Activated B cell treated with CpG ODN at 0.5 μM for 24 hours (primary cell): ENCODE measurements at regions of chr2 and their contacts with region 1.

Region 1: GRCh38 chr2:62065243-62065642 is 130.7 kb upstream of the B3GNT2 start:
- DNase-seq: no peak
- ATAC-seq: peak; percentile 16
- H3K4me3 Mint-ChIP-seq: no peak overlapping the region
- H3K27ac Mint-ChIP-seq: peak overlapping the region; percentile 79
- H3K4me1 Mint-ChIP-seq: peaks cover 27% of the 10 kb centered on the region
- H3K27me3 Mint-ChIP-seq: no peaks in the 10 kb centered on the region
- CTCF ChIP-seq: no peak

Region 2: GRCh38 chr2:60756191-60757041 is 1308.8 kb before region 1 on chr2 and contains the start of gene PAPOLG:
- CTCF ChIA-PET with region 1: no interaction called
- POLR2A ChIA-PET with region 1: no interaction called
- intact Hi-C with region 1: no loop called
- DNase-seq: peak; percentile 96
- ATAC-seq: peak; percentile 100
- H3K4me3 Mint-ChIP-seq: peak within 1 kb of the TSS; percentile 100
- H3K27ac Mint-ChIP-seq: peak within 1 kb of the TSS; percentile 99
- H3K4me1 Mint-ChIP-seq: peaks cover 29% of the 10 kb centered on the region
- H3K27me3 Mint-ChIP-seq: no peaks in the 10 kb centered on the region
- CTCF ChIP-seq: no peak
- total RNA-seq, gene PAPOLG: 20.3 and 20.5 TPM in 2 replicates

Region 3: GRCh38 chr2:61785583-61785982 is 279.7 kb before region 1 on chr2:
- CTCF ChIA-PET with region 1: no interaction called
- POLR2A ChIA-PET with region 1: no interaction called
- intact Hi-C with region 1: no loop called
- DNase-seq: no peak
- ATAC-seq: no peak
- H3K4me3 Mint-ChIP-seq: no peak overlapping the region
- H3K27ac Mint-ChIP-seq: no peak overlapping the region
- H3K4me1 Mint-ChIP-seq: no peaks in the 10 kb centered on the region
- H3K27me3 Mint-ChIP-seq: peaks cover 6% of the 10 kb centered on the region
- CTCF ChIP-seq: no peak

Region 4: DNA sequence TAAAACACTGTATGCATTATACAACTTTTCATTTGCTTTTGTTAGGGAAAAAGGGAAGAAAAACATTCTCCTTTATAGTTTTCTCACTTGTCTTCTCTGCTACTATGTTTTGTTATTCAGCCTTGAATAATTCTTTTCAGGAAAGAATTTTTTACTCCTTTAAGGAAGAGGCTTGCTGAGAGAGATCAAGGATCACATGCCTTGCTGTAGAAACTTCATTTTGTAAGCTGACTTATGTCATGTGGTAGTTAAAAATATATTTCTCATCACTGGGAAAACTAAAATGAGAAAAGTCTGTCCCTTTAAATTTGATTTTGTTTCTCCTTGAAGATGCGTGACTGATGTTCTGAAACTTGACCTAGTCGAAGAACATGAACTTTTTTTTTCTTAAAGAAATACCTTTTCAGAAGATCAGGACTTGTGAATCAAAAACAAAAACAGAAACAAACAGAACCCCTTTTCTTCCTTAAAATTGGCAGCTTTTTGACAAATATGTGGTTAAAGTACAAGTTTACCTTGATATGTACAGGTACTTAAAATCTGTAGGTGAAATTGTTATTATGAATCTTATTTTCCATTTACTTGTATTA is 14.7 kb before region 1 on chr2:
- CTCF ChIA-PET with region 1: no interaction called
- POLR2A ChIA-PET with region 1: no interaction called
- intact Hi-C with region 1: loop called (anchors 1 kb)
- DNase-seq: no peak
- ATAC-seq: no peak
- H3K4me3 Mint-ChIP-seq: no peak overlapping the region
- H3K27ac Mint-ChIP-seq: no peak overlapping the region
- H3K4me1 Mint-ChIP-seq: peaks cover 9% of the 10 kb centered on the region
- H3K27me3 Mint-ChIP-seq: no peaks in the 10 kb centered on the region
- CTCF ChIP-seq: no peak